Endothelial cell of umbilical vein (primary cell): ENCODE measurements at regions of chr11 and their contacts with region 1.

Region 1: GRCh38 chr11:94897330-94897768 is 76.0 kb downstream of the CWC15 start:
- DNase-seq: peak; percentile 61
- H3K4me3 ChIP-seq: no peak overlapping the region
- H3K27ac ChIP-seq: no peak overlapping the region
- H3K4me1 ChIP-seq: peaks cover 11% of the 10 kb centered on the region
- H3K27me3 ChIP-seq: no peaks in the 10 kb centered on the region
- CTCF ChIP-seq: peak; percentile 81 to 85
- POLR2A ChIP-seq: no peak

Region 2: DNA sequence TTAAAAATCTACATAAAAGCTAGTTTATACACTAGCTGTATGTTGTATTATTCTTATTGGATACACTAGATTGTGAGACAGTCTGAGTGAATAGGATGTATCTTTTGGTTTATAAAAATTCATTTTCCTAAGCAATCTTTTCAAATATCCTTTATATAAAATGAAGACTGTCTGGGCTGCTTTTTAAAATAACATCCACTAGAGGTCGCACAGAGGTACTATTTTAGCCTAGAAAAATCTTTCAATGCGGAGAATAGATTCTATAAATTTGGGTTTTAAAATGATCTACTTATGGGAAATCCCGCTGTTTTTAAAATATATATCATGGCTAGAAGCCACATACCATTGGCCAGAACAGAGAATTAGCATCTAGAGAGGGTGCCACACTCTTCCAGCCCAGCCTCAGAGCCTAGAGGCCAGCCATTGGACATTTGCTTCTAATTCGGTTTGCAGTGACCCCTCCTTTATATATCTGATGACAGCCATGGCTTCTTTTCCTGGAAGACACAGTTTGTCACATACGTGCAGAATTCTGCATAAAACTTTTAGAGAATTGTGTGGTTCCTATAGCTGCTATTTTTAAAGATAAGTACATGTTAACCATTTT is 377.8 kb before region 1 on chr11:
- CTCF ChIA-PET with region 1: interaction called, 4 read pairs
- POLR2A ChIA-PET with region 1: no interaction called
- dilution Hi-C with region 1: no loop called
- intact Hi-C with region 1: loop called (anchors 1 kb)
- DNase-seq: peak; percentile 38
- H3K4me3 ChIP-seq: no peak overlapping the region
- H3K27ac ChIP-seq: no peak overlapping the region
- H3K4me1 ChIP-seq: no peaks in the 10 kb centered on the region
- H3K27me3 ChIP-seq: peaks cover 12 to 13% of the 10 kb centered on the region in 2 experiments
- CTCF ChIP-seq: peak; percentile 30 to 40
- POLR2A ChIP-seq: no peak

Region 3: DNA sequence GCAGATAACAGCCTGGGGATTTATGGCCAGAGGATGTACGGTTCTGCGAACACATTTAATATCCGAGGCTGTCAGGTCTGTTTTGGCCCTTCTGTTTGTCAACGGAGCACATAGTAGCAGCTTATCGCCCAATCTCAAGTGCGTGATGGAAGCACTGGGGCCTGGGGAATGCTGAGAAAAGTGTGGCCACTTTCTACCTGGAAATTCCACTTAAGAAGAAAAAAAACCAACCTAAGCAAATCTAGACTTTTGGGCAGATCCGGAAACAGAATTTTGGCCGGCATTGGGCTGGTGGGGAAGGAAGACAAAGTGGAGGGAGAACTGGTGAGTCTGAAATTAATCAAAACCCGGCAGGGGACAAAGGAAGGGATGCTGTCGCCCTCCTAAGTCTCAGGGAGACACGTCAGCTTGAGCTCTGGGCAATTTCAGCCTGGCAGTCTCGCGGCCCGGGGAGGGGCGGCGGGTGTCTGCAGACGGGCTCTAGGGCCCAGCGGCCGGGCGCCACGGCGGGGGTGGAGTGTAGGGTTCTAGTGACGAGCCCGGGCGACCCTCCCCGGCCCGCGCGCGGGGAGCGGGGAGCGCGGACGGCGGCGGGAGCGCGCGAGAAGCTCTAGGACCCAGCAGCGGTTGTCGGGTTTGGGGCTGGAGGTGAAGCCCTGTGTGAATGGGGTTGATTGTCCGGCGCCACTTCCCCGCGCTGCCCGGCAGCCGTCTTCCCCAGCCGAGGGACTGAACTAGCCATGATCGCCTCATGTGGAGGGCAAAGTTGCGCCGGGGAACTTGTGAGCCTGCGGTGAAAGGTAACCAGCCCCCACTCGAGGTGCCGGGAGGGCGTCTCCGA is 129.4 kb before region 1 on chr11 and contains the start of gene AMOTL1:
- CTCF ChIA-PET with region 1: interaction called, 5 read pairs
- POLR2A ChIA-PET with region 1: no interaction called
- dilution Hi-C with region 1: no loop called
- intact Hi-C with region 1: loop called (anchors 1 kb)
- DNase-seq: peak; percentile 85
- H3K4me3 ChIP-seq: peak within 1 kb of the TSS; percentile 55 to 76 (median 73)
- H3K27ac ChIP-seq: peak within 1 kb of the TSS; percentile 85
- H3K4me1 ChIP-seq: peaks cover 19% of the 10 kb centered on the region
- H3K27me3 ChIP-seq: no peaks in the 10 kb centered on the region
- CTCF ChIP-seq: no peak
- POLR2A ChIP-seq: peak; percentile 77
- total RNA-seq, gene AMOTL1: 37.8 and 41.8 TPM in 2 replicates

Region 4: DNA sequence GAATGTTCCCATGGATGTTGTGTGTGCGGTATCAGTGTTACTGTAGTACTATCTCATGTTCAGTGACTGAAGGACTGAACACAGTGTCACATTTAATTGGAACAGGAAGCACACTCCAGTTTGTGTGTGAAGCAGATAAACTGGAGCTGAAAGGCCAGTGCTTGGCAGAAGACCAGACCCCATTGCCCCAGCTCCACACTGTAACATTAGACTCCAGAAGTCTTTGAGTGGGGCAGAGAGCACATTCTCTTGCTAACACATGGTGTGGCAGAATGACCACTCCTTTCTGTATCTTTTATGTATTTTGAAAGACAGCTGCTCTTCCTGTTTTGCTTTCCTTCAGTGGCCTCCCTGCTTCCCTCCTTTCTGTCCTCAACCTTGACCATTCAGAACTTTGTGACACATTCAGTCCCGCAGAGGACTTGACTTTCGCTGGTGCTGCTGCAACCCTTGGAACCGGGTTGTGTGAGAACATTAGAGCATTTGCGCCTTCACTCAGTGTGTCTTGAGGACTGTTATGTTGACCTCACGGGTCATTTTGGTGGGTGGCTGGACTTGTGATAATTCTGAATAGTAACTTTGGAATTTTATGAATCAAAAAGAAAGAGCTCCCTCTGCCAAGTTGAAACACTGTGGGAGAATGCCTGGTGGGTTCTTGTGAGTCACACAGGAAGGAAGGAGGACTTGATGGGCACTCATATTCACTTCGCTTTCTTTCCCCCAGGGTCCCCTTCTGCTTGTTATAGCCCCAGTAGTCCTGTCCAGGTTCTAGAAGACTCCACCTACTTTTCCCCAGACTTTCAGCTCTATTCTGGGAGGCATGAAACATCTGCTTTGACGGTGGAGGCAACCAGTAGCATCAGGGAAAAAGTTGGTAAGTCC is 102.8 kb before region 1 on chr11:
- CTCF ChIA-PET with region 1: interaction called, 12 read pairs
- POLR2A ChIA-PET with region 1: no interaction called
- dilution Hi-C with region 1: no loop called
- intact Hi-C with region 1: no loop called
- DNase-seq: peak; percentile 93
- H3K4me3 ChIP-seq: peak overlapping the region in 2 of 3 experiments; percentile 4 to 15
- H3K27ac ChIP-seq: peak overlapping the region; percentile 90
- H3K4me1 ChIP-seq: peaks cover 44% of the 10 kb centered on the region
- H3K27me3 ChIP-seq: no peaks in the 10 kb centered on the region
- CTCF ChIP-seq: no peak
- POLR2A ChIP-seq: no peak

Region 5: GRCh38 chr11:94885133-94885532 is 12.2 kb before region 1 on chr11:
- CTCF ChIA-PET with region 1: interaction called, 16 read pairs
- POLR2A ChIA-PET with region 1: no interaction called
- dilution Hi-C with region 1: no loop called
- intact Hi-C with region 1: no loop called
- DNase-seq: no peak
- H3K4me3 ChIP-seq: no peak overlapping the region
- H3K27ac ChIP-seq: no peak overlapping the region
- H3K4me1 ChIP-seq: no peaks in the 10 kb centered on the region
- H3K27me3 ChIP-seq: no peaks in the 10 kb centered on the region
- CTCF ChIP-seq: no peak
- POLR2A ChIP-seq: no peak

Region 6: GRCh38 chr11:94926698-94927237 is 29.4 kb after region 1 on chr11:
- CTCF ChIA-PET with region 1: interaction called, 17 read pairs
- POLR2A ChIA-PET with region 1: no interaction called
- dilution Hi-C with region 1: no loop called
- intact Hi-C with region 1: no loop called
- DNase-seq: peak; percentile 94
- H3K4me3 ChIP-seq: no peak overlapping the region
- H3K27ac ChIP-seq: peak overlapping the region; percentile 92
- H3K4me1 ChIP-seq: peaks cover 39% of the 10 kb centered on the region
- H3K27me3 ChIP-seq: no peaks in the 10 kb centered on the region
- CTCF ChIP-seq: no peak
- POLR2A ChIP-seq: peak; percentile 43

Region 7: GRCh38 chr11:94973099-94973968 is 76.0 kb after region 1 on chr11 and contains the starts of genes CWC15 and KDM4D:
- CTCF ChIA-PET with region 1: interaction called, 16 read pairs
- POLR2A ChIA-PET with region 1: no interaction called
- dilution Hi-C with region 1: no loop called
- intact Hi-C with region 1: loop called (anchors 1 kb)
- DNase-seq: peak; percentile 95
- H3K4me3 ChIP-seq: peak within 1 kb of the TSS; percentile 77 to 94 (median 92)
- H3K27ac ChIP-seq: peak within 1 kb of the TSS; percentile 76
- H3K4me1 ChIP-seq: peaks cover 9% of the 10 kb centered on the region
- H3K27me3 ChIP-seq: no peaks in the 10 kb centered on the region
- CTCF ChIP-seq: no peak
- POLR2A ChIP-seq: peak; percentile 91
- total RNA-seq, gene CWC15: 72.0 and 75.6 TPM in 2 replicates
- total RNA-seq, gene KDM4D: 1.0 and 1.3 TPM in 2 replicates

Region 8: GRCh38 chr11:95150946-95151684 is 253.8 kb after region 1 on chr11:
- CTCF ChIA-PET with region 1: no interaction called
- POLR2A ChIA-PET with region 1: no interaction called
- dilution Hi-C with region 1: no loop called
- intact Hi-C with region 1: no loop called
- DNase-seq: peak; percentile 92
- H3K4me3 ChIP-seq: peak overlapping the region; percentile 9 to 39 (median 34)
- H3K27ac ChIP-seq: peak overlapping the region; percentile 62
- H3K4me1 ChIP-seq: peaks cover 36% of the 10 kb centered on the region
- H3K27me3 ChIP-seq: no peaks in the 10 kb centered on the region
- CTCF ChIP-seq: peak; percentile 73 to 84
- POLR2A ChIP-seq: no peak